ENCODE measurements at regions of chr9 and their contacts with region 1.

Region 1: GRCh38 chr9:16039218-16039987 is 486.6 kb downstream of the CCDC171 start:
- DNase-seq: peak; percentile 34
- ATAC-seq: peak; percentile 94
- H3K4me3 ChIP-seq: no peak overlapping the region
- H3K27ac ChIP-seq: no peak overlapping the region
- H3K4me1 ChIP-seq: peaks cover 6 to 9% of the 10 kb centered on the region in 2 experiments; a peak in 3 of 4 replicates
- H3K27me3 ChIP-seq: no peaks in the 10 kb centered on the region
- CTCF ChIP-seq: peak; percentile 25 to 63 (median 51); a peak in 4 of 6 replicates
- POLR2A ChIP-seq: no peak
- RAD21 ChIP-seq: 0 out of 2 replicates have a peak, but pooled peaks have one; percentile 25

Region 2: DNA sequence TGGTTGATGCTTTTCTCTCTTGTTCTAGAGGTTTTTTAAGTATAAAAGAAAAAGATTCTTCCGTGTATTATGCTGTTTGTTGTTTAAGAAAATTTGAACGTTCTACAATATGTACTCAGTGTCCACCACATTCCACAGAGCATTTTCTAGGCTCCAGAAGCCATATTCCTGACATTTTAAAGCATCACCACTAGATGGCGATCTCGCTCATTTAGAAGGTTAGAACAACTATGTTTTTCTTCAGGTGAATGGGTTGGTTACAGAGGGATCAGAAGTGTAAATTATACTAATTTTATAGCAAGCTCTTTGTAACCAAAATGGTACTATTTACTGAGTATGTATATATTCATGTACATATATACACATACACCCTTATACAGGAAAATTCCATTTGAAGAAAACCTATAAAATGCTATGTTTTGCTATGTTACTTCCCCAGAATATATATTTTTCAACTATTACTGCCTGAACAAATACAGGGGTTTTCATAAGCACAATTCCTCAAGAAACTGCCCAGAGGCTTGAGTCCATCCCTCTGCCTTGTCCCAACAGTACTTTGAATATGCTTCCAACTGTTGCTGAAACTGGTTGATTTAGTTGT is 202.2 kb before region 1 on chr9:
- CTCF ChIA-PET with region 1: no interaction called
- POLR2A ChIA-PET with region 1: no interaction called
- RAD21 ChIA-PET with region 1: no interaction called
- intact Hi-C with region 1: loop called (anchors 1 kb)
- DNase-seq: peak; percentile 36
- ATAC-seq: peak; percentile 84
- H3K4me3 ChIP-seq: no peak overlapping the region
- H3K27ac ChIP-seq: no peak overlapping the region
- H3K4me1 ChIP-seq: no peaks in the 10 kb centered on the region
- H3K27me3 ChIP-seq: no peaks in the 10 kb centered on the region
- CTCF ChIP-seq: peak; percentile 39 to 86 (median 67); a peak in 5 of 6 replicates
- POLR2A ChIP-seq: no peak
- RAD21 ChIP-seq: peak; percentile 52

Region 3: GRCh38 chr9:16126042-16126441 is 86.6 kb after region 1 on chr9:
- CTCF ChIA-PET with region 1: no interaction called
- POLR2A ChIA-PET with region 1: no interaction called
- RAD21 ChIA-PET with region 1: no interaction called
- intact Hi-C with region 1: no loop called
- DNase-seq: no peak
- ATAC-seq: no peak
- H3K4me3 ChIP-seq: no peak overlapping the region
- H3K27ac ChIP-seq: no peak overlapping the region
- H3K4me1 ChIP-seq: no peaks in the 10 kb centered on the region
- H3K27me3 ChIP-seq: no peaks in the 10 kb centered on the region
- CTCF ChIP-seq: no peak
- POLR2A ChIP-seq: no peak
- RAD21 ChIP-seq: no peak

Measured in HCT116 (cell line).